Left ventricle myocardium inferior (tissue), 1 donor: ENCODE measurements at regions of chr17 and their contacts with region 1.

Region 1: GRCh38 chr17:82145550-82146190 is 47.6 kb upstream of the FASN start:
- DNase-seq: no peak
- H3K4me3 ChIP-seq: no peak overlapping the region
- H3K27ac ChIP-seq: no peak overlapping the region
- H3K4me1 ChIP-seq: no peaks in the 10 kb centered on the region
- H3K27me3 ChIP-seq: no peaks in the 10 kb centered on the region
- CTCF ChIP-seq: no peak

Region 2: DNA sequence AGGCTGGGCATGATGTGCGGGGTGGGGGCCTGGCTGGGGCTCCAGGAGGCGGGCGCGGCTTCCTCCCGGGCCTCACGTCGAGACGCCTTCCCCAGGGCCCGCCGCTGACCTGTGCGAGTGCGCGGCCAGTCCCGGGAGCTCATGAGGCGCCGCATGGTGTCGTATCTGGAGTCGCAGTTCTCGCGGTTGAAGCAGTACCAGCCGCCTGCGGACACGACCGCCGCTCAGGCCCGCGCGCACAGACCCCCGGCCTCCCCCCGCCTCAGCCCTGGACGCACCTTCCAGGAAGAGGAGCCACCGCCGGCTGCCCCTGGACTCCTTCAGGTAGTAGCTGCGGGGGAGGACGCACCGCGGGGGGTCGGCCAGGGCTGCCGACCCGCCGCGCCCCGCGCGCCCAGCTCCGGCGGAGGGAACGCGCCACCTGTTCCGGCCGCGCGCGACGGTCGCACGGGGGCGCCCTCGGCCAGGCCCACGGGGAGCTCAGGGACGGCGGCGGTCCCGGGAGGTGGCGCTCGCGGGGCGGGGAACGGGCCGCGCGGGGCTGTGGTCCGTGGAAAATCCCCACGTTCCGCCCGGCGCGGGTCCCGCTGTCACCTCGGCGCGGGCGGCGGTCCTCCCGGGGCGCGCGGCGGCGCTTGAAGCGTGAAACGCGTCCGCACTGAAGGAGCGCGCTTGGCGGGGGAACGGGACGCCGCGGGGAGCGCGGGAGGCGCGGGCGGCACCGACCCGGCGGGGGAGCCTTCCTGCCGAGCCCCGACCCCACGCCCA is 186.1 kb before region 1 on chr17:
- intact Hi-C with region 1: loop called (anchors 10 kb)
- DNase-seq: peak; percentile 75
- H3K4me3 ChIP-seq: peak overlapping the region; percentile 64
- H3K27ac ChIP-seq: no peak overlapping the region
- H3K4me1 ChIP-seq: peaks cover 25% of the 10 kb centered on the region
- H3K27me3 ChIP-seq: peaks cover 91% of the 10 kb centered on the region
- CTCF ChIP-seq: peak; percentile 88

Region 3: DNA sequence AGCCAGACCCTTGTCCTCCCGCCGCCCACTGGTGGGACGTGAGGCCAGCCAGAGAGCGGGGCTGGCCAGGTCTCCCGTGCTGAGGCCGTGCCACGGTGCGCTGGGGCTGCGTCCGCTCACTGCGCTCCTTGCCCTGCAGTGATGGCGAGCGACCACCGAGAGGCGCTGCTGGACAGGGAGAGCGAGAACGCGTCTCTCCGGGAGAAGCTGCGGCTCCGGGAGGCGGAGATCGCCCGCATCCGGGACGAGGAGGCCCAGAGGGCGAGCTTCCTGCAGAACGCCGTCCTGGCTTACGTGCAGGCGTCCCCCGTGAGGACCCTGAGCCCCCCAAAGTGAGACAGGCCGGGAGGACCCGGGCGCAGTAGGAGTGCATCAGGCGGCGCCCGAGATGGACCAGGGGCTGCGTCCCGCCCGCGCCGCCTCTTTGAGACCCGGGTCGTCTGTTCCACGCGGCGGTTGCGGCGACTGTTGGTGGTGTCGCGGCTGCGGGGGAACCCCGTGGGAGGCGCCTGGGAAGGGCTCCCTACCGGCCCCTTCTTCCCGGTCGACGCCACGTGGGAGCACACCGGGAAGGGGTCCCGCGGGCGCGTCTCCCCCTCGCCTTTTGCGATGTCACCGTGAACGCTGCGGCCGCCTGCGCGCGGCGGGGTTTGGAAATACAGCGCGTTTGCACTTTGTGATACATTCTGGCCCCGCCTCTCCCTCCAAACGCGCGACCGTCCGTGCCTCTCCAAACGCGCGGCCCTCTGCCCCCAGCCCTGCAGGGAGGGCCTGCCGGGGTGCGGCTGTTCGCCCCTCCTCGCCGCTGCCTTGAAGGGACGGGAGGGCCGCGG is 115.0 kb before region 1 on chr17:
- intact Hi-C with region 1: loop called (anchors 5 kb)
- DNase-seq: peak; percentile 81
- H3K4me3 ChIP-seq: peak overlapping the region; percentile 68
- H3K27ac ChIP-seq: no peak overlapping the region
- H3K4me1 ChIP-seq: peaks cover 33% of the 10 kb centered on the region
- H3K27me3 ChIP-seq: peaks cover 9% of the 10 kb centered on the region
- CTCF ChIP-seq: peak; percentile 95